Prostate gland (tissue), 2 donors: ENCODE measurements at regions of chr3 and their contacts with region 1.

Region 1: GRCh38 chr3:152071924-152072323 is 196.8 kb upstream of the MBNL1 start:
- DNase-seq: no peak
- H3K4me3 ChIP-seq: no peak overlapping the region
- H3K27ac ChIP-seq: no peak overlapping the region
- H3K4me1 ChIP-seq: no peaks in the 10 kb centered on the region
- H3K27me3 ChIP-seq: no peaks in the 10 kb centered on the region
- CTCF ChIP-seq: peak in 3 of 4 experiments; percentile 28 to 49 (median 37)
- POLR2A ChIP-seq: no peak

Region 2: DNA sequence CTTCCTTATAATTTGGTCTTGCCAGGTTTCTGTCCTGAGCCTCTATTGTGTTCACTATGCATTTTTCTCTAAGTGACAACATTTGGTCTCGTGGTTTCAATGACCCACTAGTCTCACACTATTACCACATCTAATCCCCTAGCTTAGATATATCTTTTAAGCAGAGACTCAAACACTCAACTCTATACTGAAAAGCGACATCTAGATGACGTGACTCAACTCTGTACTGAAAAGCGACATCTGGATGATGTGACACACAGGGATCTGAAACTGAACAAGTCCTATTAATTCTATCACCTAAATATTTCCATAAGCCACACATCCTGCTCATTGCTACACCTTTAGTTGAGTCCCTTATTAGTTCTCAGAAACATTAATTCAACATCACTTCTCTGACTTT is 55.1 kb after region 1 on chr3:
- intact Hi-C with region 1: no loop called
- DNase-seq: no peak
- H3K4me3 ChIP-seq: no peak overlapping the region
- H3K27ac ChIP-seq: no peak overlapping the region
- H3K4me1 ChIP-seq: no peaks in the 10 kb centered on the region
- H3K27me3 ChIP-seq: no peaks in the 10 kb centered on the region
- CTCF ChIP-seq: no peak
- POLR2A ChIP-seq: no peak

Region 3: DNA sequence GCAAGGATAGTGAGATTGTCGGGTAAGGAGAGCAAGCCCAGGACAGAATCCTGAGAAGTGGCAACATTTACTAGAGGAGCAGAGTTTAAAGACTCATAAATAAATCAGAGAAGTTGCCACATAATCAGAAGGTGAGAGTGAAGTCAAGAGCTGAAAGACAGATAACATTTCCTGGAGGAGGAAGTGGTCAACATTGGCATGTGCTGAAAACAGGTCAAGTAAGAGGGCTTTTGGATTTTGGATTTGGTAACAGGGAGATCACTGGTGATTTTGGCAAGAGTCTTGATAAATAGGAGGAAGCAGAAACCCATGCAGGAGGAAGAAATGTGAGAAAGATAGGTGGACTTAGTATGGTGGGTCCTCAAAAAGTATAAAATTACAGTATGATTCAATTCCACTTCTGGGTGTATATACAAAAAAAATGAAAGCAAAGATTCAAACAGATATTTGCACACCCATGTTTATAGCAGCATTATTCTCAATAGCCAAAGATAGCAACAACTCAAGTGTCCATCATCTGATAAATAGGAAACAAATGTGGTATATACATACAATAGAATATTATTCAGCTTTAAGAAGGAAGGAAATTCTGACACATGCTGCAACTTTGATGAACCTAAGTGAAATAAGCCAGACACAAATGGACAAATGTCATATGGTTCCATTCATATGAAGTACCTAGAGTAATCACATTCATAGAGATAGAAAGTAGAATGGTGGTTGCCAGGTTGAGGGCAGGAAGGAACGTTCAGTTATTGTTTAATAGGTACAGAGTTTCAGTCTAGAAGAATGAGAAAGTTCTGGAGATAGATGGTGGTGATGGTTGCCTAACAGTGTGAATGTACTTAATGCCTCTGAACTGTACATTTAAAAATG is 169.5 kb after region 1 on chr3:
- intact Hi-C with region 1: no loop called
- DNase-seq: no peak
- H3K4me3 ChIP-seq: no peak overlapping the region
- H3K27ac ChIP-seq: no peak overlapping the region
- H3K4me1 ChIP-seq: no peaks in the 10 kb centered on the region
- H3K27me3 ChIP-seq: no peaks in the 10 kb centered on the region
- CTCF ChIP-seq: no peak
- POLR2A ChIP-seq: no peak

Region 4: GRCh38 chr3:152444029-152444641 is 372.2 kb after region 1 on chr3:
- intact Hi-C with region 1: loop called (anchors 5 kb)
- DNase-seq: no peak
- H3K4me3 ChIP-seq: no peak overlapping the region
- H3K27ac ChIP-seq: no peak overlapping the region
- H3K4me1 ChIP-seq: no peaks in the 10 kb centered on the region
- H3K27me3 ChIP-seq: no peaks in the 10 kb centered on the region
- CTCF ChIP-seq: peak; percentile 62 to 86 (median 72)
- POLR2A ChIP-seq: no peak

Region 5: GRCh38 chr3:152471814-152472671 is 400.1 kb after region 1 on chr3:
- intact Hi-C with region 1: loop called (anchors 2 kb)
- DNase-seq: peak; percentile 28
- H3K4me3 ChIP-seq: no peak overlapping the region
- H3K27ac ChIP-seq: no peak overlapping the region
- H3K4me1 ChIP-seq: no peaks in the 10 kb centered on the region
- H3K27me3 ChIP-seq: no peaks in the 10 kb centered on the region
- CTCF ChIP-seq: peak in 3 of 4 experiments; percentile 51 to 60 (median 52)
- POLR2A ChIP-seq: no peak